Mammary epithelial cell (primary cell): ENCODE measurements at regions of chr13 and their contacts with region 1.

Region 1: GRCh38 chr13:46181840-46182490 is at the start of gene LCP1:
- DNase-seq: peak; percentile 10
- H3K4me3 ChIP-seq: no peak within 1 kb of the TSS
- H3K27ac ChIP-seq: no peak within 1 kb of the TSS
- H3K4me1 ChIP-seq: peaks cover 5% of the 10 kb centered on the region
- H3K27me3 ChIP-seq: no peaks in the 10 kb centered on the region
- CTCF ChIP-seq: no peak
- total RNA-seq, gene LCP1: 149 to 454 TPM

Region 2: DNA sequence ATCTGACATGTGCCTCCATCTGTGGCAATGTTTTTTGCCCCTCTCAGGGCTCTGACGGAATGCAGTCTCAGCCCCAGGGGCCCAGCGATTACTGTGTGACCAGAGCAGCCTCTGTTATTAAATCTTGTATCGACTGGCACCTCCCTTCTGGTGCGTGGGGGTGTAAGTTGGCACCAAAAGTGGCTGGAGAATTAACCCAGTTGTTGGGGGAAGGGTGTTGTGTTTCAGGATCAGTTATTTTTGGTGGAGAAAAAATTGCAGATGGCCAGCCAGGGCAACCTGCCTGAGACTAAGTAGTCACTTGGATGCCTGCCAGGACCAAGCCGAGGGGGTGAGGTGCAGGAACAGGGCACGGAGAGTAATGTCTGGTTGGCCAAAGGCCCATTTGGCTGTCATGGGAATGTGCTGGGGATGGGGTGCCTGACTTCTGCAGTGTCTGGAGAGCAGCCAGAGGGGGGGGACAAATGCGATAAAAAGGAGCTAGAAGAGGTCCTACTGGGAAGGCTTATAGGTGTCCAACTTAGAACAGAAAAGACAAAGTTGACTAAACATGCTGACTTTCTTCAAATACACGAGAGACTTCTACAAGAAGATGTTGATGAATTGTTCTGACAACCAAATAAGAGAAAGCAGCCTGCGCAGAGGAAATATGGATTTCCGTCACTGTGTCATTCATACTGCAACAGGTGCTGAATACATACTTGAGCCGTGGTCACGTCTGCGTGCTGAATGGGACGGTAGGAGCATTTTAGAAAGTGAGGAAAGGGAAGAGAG is 400.2 kb before region 1 on chr13:
- CTCF ChIA-PET with region 1: no interaction called
- dilution Hi-C with region 1: no loop called
- in situ Hi-C with region 1: no loop called
- intact Hi-C with region 1: no loop called
- DNase-seq: peak; percentile 31
- H3K4me3 ChIP-seq: no peak overlapping the region
- H3K27ac ChIP-seq: no peak overlapping the region
- H3K4me1 ChIP-seq: peaks cover 27% of the 10 kb centered on the region
- H3K27me3 ChIP-seq: no peaks in the 10 kb centered on the region
- CTCF ChIP-seq: no peak

Region 3: GRCh38 chr13:46152627-46153328 is 29.2 kb before region 1 on chr13:
- CTCF ChIA-PET with region 1: interaction called, 17 read pairs
- dilution Hi-C with region 1: no loop called
- in situ Hi-C with region 1: no loop called
- intact Hi-C with region 1: no loop called
- DNase-seq: no peak
- H3K4me3 ChIP-seq: no peak overlapping the region
- H3K27ac ChIP-seq: no peak overlapping the region
- H3K4me1 ChIP-seq: no peaks in the 10 kb centered on the region
- H3K27me3 ChIP-seq: no peaks in the 10 kb centered on the region
- CTCF ChIP-seq: no peak

Region 4: DNA sequence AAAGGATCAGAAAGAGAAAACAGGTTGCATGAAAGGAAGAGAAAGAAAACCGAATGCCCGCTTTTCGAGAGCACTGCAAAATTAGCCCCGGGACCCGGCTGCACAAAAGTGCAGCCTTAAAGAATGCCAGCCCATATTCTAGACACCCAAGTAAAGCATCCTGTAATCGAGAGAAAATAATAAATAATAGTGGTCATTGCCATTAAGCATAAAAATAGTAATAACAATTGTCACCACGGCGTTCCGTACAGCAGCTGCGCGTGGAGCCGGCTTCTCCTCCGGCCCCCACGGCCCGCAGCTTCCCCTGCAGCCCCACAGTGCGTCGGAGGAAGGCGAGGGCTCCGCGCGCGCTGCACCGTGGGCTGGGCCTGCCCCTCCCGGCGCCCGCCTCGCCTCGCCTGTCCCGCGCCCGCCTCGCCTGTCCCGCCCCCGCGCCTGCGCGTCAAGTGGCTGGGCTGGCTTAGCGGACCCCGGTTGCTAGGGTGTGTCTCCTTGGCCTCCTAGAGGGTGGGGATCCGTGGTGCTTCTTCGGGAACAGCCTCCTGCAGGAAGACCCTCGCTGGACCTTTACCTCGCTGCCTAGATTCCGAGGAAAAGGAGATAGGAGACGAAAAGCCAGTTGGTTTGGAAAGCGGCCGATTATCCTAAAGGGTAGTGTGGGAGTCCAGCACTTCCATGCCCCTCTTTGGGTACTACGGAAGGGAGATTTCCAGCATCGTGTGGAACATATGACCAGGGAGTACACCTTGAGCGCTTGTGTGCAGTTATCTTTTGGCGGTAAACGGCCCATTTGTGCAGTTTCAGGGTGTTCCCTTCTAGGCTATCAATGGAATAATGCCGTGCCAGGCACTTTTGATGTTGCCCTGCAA is 29.8 kb after region 1 on chr13 and contains the start of gene LRRC63:
- CTCF ChIA-PET with region 1: no interaction called
- dilution Hi-C with region 1: no loop called
- in situ Hi-C with region 1: no loop called
- intact Hi-C with region 1: loop called (anchors 2 kb)
- DNase-seq: peak; percentile 35
- H3K4me3 ChIP-seq: peak within 1 kb of the TSS; percentile 36 to 51 (median 46)
- H3K27ac ChIP-seq: no peak within 1 kb of the TSS
- H3K4me1 ChIP-seq: peaks cover 12% of the 10 kb centered on the region
- H3K27me3 ChIP-seq: no peaks in the 10 kb centered on the region
- CTCF ChIP-seq: no peak
- total RNA-seq, gene LRRC63: not detected

Region 5: DNA sequence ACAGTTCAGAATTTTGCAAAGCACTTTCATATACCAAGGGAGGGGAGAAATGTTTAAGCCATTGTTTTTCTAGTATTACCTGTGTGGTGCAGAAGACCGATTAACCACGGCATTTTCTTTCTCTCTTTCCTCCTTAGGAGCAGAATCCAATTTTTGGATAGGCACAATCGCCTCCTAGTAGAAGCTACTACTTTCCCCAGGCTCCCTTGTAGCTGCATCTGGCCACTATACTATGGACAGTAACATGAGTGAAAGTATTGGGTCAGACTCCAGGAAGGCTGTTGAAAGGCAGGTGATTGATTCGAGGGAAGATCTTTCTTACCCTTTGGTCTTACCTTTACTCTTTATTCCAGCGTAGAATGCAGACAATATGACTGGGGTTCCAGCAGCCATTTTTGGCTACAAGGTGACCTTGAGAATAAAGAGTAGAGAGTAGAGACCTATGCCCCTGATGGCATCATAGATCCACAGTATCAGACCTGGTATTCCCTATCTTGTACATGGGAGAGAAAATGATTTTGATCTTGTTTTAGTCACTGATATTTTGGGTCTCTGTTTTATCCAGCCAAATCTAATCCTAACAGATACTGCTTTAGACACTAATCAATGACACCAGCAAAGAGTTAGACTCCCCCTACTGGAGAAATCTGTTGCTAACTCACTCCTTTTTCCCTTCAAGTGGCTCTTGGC is 106.8 kb after region 1 on chr13:
- CTCF ChIA-PET with region 1: no interaction called
- dilution Hi-C with region 1: no loop called
- in situ Hi-C with region 1: no loop called
- intact Hi-C with region 1: loop called (anchors 2 kb)
- DNase-seq: peak; percentile 38
- H3K4me3 ChIP-seq: no peak overlapping the region
- H3K27ac ChIP-seq: no peak overlapping the region
- H3K4me1 ChIP-seq: no peaks in the 10 kb centered on the region
- H3K27me3 ChIP-seq: peaks cover 5% of the 10 kb centered on the region
- CTCF ChIP-seq: peak; percentile 74 to 84

Region 6: DNA sequence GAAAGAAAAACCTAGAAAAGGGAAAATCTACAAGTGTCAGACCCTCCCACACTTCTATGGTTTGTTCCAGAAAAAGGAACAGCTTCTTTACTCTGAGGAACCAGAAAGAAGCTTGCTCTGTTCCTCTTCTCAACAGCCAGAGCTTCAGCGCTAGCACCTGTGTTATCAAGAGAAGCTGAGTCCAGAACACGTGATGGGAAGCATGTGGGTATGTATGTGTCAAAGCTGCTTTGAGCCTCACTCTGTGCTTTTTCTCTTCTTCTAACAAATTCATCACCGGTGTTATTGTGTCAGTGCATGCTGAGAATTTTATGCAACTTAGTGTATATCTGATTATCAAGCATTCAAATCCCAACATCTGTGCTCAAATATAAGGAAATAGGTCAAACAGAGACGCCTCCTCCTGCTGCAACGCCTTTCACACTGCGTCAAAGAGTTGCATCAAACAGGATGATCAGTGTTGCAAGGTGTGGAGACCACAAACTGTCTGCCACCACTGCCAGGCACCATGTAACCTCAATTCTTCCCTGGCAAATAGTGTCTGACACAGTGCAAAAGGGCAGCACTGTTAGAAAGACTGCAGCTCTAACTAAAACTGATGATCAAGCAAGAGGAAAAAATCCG is 113.6 kb after region 1 on chr13:
- CTCF ChIA-PET with region 1: no interaction called
- dilution Hi-C with region 1: no loop called
- in situ Hi-C with region 1: no loop called
- intact Hi-C with region 1: loop called (anchors 1 kb)
- DNase-seq: peak; percentile 73
- H3K4me3 ChIP-seq: no peak overlapping the region
- H3K27ac ChIP-seq: peak overlapping the region; percentile 88
- H3K4me1 ChIP-seq: peaks cover 26% of the 10 kb centered on the region
- H3K27me3 ChIP-seq: no peaks in the 10 kb centered on the region
- CTCF ChIP-seq: no peak